ENCODE measurements at regions of chr11 and their contacts with region 1.

Region 1: DNA sequence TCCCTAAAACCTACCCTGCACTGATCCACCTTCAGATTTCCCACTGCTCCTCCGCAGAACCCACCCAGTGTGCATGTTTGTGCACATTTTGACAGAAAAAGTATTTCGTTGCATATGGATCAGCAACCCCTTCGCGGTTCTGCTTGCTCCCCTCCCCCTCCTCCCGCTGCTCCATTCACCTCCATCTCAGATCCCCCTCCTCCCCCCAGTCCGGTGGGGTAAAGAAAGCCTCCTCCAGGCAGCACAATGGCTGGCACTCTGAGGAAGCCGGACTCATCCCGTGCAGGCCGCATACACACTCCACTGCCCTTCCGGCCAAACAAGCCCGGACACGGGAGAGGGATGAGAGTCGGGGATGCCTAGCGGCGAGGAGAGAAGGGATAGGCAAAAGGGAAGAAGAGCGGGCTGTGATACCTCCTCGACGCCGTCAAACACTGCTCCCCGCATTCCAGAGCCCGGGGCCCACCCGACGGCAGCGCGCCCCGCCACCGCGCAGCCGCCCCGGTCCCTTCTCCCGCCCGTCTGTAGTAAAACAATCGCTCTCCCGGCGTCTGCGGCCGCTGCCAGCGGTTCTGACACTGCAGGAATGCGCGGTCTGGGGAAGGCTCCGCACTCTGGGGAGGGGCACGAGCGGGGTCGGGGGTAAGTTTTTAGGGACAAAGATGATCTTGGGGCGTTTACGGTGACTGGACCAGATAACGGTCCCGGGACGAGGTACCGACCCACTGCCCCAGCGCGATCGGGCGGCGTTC is 915 bp downstream of the FEZ1 start:
- DNase-seq: peak; percentile 45 to 73 (median 54)
- H3K4me3 ChIP-seq: peak overlapping the region; percentile 51 to 93 (median 80)
- H3K27ac ChIP-seq: peak overlapping the region; percentile 79 to 99 (median 97)
- H3K27me3 ChIP-seq: no peaks in the 10 kb centered on the region
- CTCF ChIP-seq: peak in 2 of 56 donors; percentile 12 to 23

Region 2: GRCh38 chr11:125111343-125112207 is 383.6 kb before region 1 on chr11 and contains the start of gene TMEM218:
- intact Hi-C with region 1: loop called in 1 of 2 experiments (anchors 5 kb)
- DNase-seq: peak; percentile 99 to 100 (median 100)
- H3K4me3 ChIP-seq: peak within 1 kb of the TSS; percentile 50 to 97 (median 86)
- H3K27ac ChIP-seq: peak within 1 kb of the TSS in 57 of 59 donors; percentile 43 to 92 (median 78)
- H3K27me3 ChIP-seq: no peaks in the 10 kb centered on the region
- CTCF ChIP-seq: peak in 14 of 56 donors; percentile 7 to 42 (median 24)
- total RNA-seq, gene TMEM218: 5.4 to 17.7 (median 9.7) TPM

Region 3: GRCh38 chr11:125451400-125452124 is 43.6 kb before region 1 on chr11:
- intact Hi-C with region 1: loop called (anchors 2 to 5 kb)
- DNase-seq: peak; percentile 80 to 94 (median 92)
- H3K4me3 ChIP-seq: peak overlapping the region in 44 of 59 donors; percentile 0 to 56 (median 27)
- H3K27ac ChIP-seq: peak overlapping the region; percentile 91 to 100 (median 98)
- H3K27me3 ChIP-seq: no peaks in the 10 kb centered on the region
- CTCF ChIP-seq: peak in 14 of 56 donors; percentile 5 to 48 (median 23)

Region 4: GRCh38 chr11:125568970-125569914 is 74.1 kb after region 1 on chr11 and contains the start of gene EI24:
- intact Hi-C with region 1: loop called (anchors 1 to 5 kb)
- DNase-seq: peak; percentile 81 to 96 (median 91)
- H3K4me3 ChIP-seq: peak within 1 kb of the TSS; percentile 65 to 99 (median 93)
- H3K27ac ChIP-seq: peak within 1 kb of the TSS; percentile 43 to 96 (median 88)
- H3K27me3 ChIP-seq: no peaks in the 10 kb centered on the region
- CTCF ChIP-seq: peak; percentile 49 to 89 (median 78)
- total RNA-seq, gene EI24: 38.1 to 71.8 (median 53.9) TPM

Region 5: DNA sequence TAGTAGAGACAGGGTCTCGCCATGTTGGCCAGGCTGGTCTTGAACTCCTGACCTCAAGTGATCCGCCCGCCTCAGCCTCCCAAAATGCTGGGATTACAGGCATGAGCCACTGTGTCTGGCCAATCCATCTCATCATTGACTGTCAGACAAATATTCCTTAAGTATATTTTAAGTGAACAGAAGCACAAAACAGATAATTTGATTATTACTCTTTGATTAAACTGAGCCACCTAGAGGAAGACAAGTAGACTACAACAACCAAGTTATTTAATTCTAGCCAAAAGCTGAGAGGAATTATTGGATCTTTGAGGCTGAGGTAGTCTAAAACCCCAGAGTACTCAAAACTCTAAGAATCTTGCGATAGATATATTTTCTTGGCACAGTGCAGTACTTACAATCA is 184.2 kb after region 1 on chr11:
- intact Hi-C with region 1: no loop called
- DNase-seq: no peak
- H3K4me3 ChIP-seq: no peak overlapping the region
- H3K27ac ChIP-seq: no peak overlapping the region
- H3K27me3 ChIP-seq: no peaks in the 10 kb centered on the region
- CTCF ChIP-seq: no peak

Region 6: GRCh38 chr11:125887373-125888324 is 392.5 kb after region 1 on chr11 and contains the start of gene HYLS1:
- intact Hi-C with region 1: loop called in 1 of 2 experiments (anchors 10 kb)
- DNase-seq: peak; percentile 85 to 96 (median 94)
- H3K4me3 ChIP-seq: peak within 1 kb of the TSS; percentile 76 to 99 (median 92)
- H3K27ac ChIP-seq: peak within 1 kb of the TSS; percentile 57 to 99 (median 95)
- H3K27me3 ChIP-seq: no peaks in the 10 kb centered on the region
- CTCF ChIP-seq: peak in 49 of 56 donors; percentile 7 to 60 (median 39)
- total RNA-seq, gene HYLS1: 4.1 to 13.5 (median 9.1) TPM